Lower leg skin (tissue), 4 donors: ENCODE measurements at regions of chr5 and their contacts with region 1.

Region 1: GRCh38 chr5:113447498-113448050 is 12.8 kb upstream of the TSSK1B start:
- DNase-seq: no peak
- H3K4me3 ChIP-seq: no peak overlapping the region
- CTCF ChIP-seq: no peak
- POLR2A ChIP-seq: no peak

Region 2: GRCh38 chr5:113495422-113495841 is 47.9 kb after region 1 on chr5:
- intact Hi-C with region 1: no loop called
- DNase-seq: no peak
- H3K4me3 ChIP-seq: no peak overlapping the region
- CTCF ChIP-seq: no peak
- POLR2A ChIP-seq: no peak

Region 3: DNA sequence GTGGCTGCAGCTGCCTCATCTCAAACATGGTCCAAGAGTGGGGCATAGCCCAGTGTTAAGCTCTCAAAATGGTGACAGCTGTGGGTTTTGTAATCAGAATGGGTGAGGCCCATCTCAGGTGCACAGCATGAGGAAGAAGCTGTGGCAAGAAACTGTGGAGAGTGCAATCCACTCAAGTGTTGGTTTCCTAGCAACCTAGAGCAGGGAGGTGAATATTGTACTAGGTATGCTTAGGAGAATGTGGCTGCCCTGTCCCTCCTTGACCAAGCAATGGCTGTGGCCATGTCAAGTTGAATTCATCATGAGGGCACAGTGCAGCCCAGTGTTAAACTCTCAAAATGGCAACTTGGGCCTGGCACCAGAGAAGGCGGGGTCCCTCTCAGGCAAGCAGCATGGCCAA is 753.8 kb after region 1 on chr5:
- intact Hi-C with region 1: loop called (anchors 5 kb)
- DNase-seq: no peak
- H3K4me3 ChIP-seq: no peak overlapping the region
- CTCF ChIP-seq: no peak
- POLR2A ChIP-seq: no peak